ENCODE measurements at regions of chr3 and their contacts with region 1.

Region 1: GRCh38 chr3:121995161-121996137 is 26.6 kb downstream of the ILDR1 start:
- DNase-seq: peak; percentile 77
- H3K4me3 ChIP-seq: no peak overlapping the region
- H3K27ac ChIP-seq: peak overlapping the region; percentile 36
- H3K4me1 ChIP-seq: no peaks in the 10 kb centered on the region
- H3K27me3 ChIP-seq: no peaks in the 10 kb centered on the region
- CTCF ChIP-seq: peak; percentile 42

Region 2: DNA sequence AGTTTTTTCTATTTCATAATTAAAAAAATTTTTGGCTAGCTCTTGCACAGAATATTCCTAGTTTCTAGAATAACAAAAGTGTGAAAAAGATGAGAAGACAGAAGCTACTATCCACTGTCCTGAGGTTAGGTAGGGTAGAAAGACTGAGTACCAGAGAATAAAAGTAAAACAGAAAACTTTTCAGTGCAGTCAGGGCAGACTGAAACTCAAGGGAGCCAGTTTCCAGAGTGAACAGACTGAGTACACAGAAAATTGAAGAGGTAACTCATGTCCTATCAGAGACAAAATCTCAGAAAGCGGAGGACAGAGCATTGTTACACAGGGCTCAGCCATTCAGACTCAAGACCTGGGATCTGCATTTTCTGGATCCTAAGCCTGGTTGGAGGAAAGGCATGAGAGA is 411.0 kb before region 1 on chr3:
- intact Hi-C with region 1: no loop called
- DNase-seq: no peak
- H3K4me3 ChIP-seq: no peak overlapping the region
- H3K27ac ChIP-seq: no peak overlapping the region
- H3K4me1 ChIP-seq: no peaks in the 10 kb centered on the region
- H3K27me3 ChIP-seq: no peaks in the 10 kb centered on the region
- CTCF ChIP-seq: no peak

Region 3: GRCh38 chr3:121855555-121855954 is 139.9 kb before region 1 on chr3:
- intact Hi-C with region 1: no loop called
- DNase-seq: no peak
- H3K4me3 ChIP-seq: no peak overlapping the region
- H3K27ac ChIP-seq: no peak overlapping the region
- H3K4me1 ChIP-seq: no peaks in the 10 kb centered on the region
- H3K27me3 ChIP-seq: no peaks in the 10 kb centered on the region
- CTCF ChIP-seq: peak; percentile 16

Region 4: DNA sequence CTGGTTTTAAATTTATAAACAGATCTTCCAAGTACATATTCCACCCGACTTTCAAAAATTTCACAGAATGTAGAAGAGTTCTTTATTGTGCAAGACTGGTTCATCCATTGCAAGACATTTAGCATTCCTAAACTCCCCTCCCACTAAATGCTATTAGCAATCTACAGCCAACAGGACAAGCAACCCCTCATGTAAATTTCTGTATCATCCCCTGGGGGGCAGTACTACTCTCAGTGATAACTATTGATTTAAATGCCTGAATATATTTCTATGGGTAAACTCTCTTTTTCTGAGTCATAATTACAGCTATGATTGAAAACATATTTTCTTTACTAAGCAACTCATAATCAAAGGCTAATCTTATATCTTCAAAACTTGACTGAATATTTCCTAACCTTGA is 111.9 kb before region 1 on chr3:
- intact Hi-C with region 1: loop called (anchors 5 kb)
- DNase-seq: no peak
- H3K4me3 ChIP-seq: no peak overlapping the region
- H3K27ac ChIP-seq: no peak overlapping the region
- H3K4me1 ChIP-seq: no peaks in the 10 kb centered on the region
- H3K27me3 ChIP-seq: no peaks in the 10 kb centered on the region
- CTCF ChIP-seq: peak; percentile 50